ENCODE measurements at regions of chr9 and their contacts with region 1.

Region 1: GRCh38 chr9:37528652-37529510 is 43.1 kb downstream of the POLR1E start:
- DNase-seq: no peak
- H3K4me3 ChIP-seq: no peak overlapping the region
- H3K27ac ChIP-seq: no peak overlapping the region
- H3K4me1 ChIP-seq: no peaks in the 10 kb centered on the region
- H3K27me3 ChIP-seq: no peaks in the 10 kb centered on the region
- CTCF ChIP-seq: no peak

Region 2: DNA sequence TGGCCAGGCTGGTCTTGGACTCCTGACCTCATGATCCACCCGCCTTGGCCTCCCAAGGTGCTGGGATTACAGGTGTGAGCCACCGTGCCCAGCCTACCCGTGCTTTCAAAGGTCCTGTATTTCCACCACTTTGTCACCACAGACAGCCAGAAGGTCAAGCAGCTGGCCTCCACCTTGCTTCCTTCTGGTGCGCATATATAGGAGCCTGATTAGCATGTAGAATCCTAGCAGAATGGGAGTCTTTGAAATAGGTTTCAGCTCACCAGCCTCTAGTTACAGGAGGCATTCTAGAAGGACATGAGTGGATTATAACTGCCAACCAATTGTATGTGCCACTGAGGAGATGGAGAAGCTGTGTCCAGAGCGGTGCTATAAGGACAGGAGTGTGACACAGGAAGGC is 24.3 kb before region 1 on chr9:
- CTCF ChIA-PET with region 1: no interaction called
- POLR2A ChIA-PET with region 1: interaction called, 10 read pairs
- intact Hi-C with region 1: no loop called
- DNase-seq: no peak
- H3K4me3 ChIP-seq: no peak overlapping the region
- H3K27ac ChIP-seq: no peak overlapping the region
- H3K4me1 ChIP-seq: no peaks in the 10 kb centered on the region
- H3K27me3 ChIP-seq: no peaks in the 10 kb centered on the region
- CTCF ChIP-seq: no peak

Measured in A673 (cell line).